GM10248 (cell line): ENCODE measurements at regions of chr16 and their contacts with region 1.

Region 1: GRCh38 chr16:30628627-30629540 is 18.7 kb upstream of the ZNF689 start:
- DNase-seq: peak; percentile 73
- CTCF ChIP-seq: peak; percentile 81

Region 2: GRCh38 chr16:30149250-30149930 is 479.5 kb before region 1 on chr16:
- CTCF ChIA-PET with region 1: no interaction called
- POLR2A ChIA-PET with region 1: no interaction called
- DNase-seq: no peak
- CTCF ChIP-seq: no peak

Region 3: DNA sequence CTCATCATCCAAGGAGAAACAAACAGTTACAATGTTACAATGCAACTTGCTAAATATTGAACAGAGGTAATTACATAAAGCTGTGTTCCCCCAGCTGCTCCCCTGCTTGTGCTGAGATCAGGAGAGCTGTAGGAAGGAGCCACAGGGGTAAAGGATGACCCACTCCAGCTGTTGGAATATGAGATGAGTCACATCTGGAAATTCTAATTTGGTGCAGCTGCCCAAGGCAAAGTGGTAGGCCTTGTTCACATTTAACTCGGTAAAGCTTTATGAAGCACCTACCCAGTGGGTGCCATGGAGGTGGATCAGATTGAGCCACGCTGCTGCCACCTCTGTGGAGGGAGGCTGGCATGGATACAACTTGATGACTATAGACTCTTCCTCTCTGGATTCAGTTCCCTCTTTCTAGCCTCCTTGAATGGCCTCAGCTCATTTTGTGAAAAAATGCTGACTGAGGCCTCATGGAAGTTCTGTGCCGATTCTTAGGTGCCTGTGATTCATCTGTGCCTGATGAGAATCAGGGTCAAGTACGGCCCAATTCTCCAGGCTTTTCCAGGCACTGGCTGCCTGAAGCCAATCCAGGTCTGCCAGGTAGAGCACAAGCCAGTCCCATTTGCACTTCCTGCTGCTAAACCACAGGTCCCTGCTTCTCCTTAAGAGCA is 26.1 kb before region 1 on chr16:
- CTCF ChIA-PET with region 1: interaction called, 41 read pairs
- POLR2A ChIA-PET with region 1: no interaction called
- DNase-seq: no peak
- CTCF ChIP-seq: no peak

Region 4: GRCh38 chr16:30609926-30610839 is 18.7 kb before region 1 on chr16 and contains the start of gene ZNF689:
- CTCF ChIA-PET with region 1: interaction called, 128 read pairs
- POLR2A ChIA-PET with region 1: no interaction called
- DNase-seq: peak; percentile 97
- CTCF ChIP-seq: no peak

Region 5: DNA sequence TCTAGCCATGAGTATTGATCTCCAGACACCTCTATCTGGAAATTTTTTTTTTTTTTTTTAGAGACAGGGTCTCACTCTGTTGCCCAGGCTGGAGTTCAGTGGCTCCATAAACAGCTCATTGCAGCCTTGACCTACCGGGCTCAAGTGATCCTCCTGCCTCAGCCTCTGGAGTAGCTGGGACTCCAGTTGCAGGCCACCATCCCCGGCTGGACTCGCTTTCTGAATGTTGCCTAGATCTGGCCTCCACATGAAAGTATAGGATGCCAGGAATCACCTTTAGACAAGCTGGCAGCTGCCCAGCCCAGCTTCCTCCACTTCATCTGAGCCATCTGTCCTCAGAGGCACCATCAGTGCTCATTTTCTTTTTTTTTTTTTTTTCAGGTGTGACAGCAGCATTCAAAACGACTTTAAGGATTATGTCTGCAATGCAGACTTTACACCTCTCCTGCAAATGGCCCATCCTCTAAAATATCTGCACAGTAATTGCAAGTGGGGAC is 15.5 kb after region 1 on chr16:
- CTCF ChIA-PET with region 1: interaction called, 25 read pairs
- POLR2A ChIA-PET with region 1: no interaction called
- DNase-seq: no peak
- CTCF ChIP-seq: no peak